Gastrocnemius medialis (tissue), 4 donors: ENCODE measurements at regions of chr3 and their contacts with region 1.

Region 1: DNA sequence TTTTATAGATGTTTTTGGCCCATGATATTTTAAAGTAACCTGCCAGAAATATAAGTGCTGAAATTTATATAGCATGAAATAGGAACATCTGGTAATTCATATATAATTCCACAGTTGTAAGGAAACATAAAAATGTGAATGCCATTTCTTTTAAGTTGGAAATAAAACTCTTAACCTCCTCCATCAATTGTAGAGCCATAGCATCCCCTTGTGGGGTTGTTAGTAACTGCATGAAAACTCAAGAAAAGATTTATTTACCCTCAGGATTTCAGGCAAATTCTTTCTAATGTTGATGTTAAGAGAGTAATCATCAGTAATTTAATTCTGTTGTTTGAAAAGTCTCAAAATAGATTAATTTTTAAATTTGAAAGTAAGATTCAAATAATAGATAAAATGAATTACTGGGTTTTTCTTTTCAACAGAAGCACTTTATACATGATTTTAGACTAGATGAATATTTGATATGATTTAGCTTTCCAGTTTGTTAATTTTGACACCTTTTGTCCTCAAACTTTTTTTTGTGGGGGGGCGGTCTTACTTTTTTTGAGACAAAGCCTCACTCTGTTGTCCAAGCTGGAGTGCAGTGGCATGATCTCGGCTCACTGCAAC is 74.7 kb downstream of the RASA2 start:
- DNase-seq: no peak
- ATAC-seq: no peak
- H3K4me3 ChIP-seq: no peak overlapping the region
- H3K27ac ChIP-seq: no peak overlapping the region
- H3K4me1 ChIP-seq: no peaks in the 10 kb centered on the region
- H3K27me3 ChIP-seq: no peaks in the 10 kb centered on the region
- CTCF ChIP-seq: peak; percentile 83 to 99 (median 86)
- POLR2A ChIP-seq: no peak

Region 2: GRCh38 chr3:141303481-141304223 is 257.9 kb before region 1 on chr3:
- in situ Hi-C with region 1: loop called in 1 of 4 experiments (anchors 25 kb)
- intact Hi-C with region 1: loop called (anchors 2 kb)
- DNase-seq: no peak
- ATAC-seq: peak; percentile 78 to 85
- H3K4me3 ChIP-seq: no peak overlapping the region
- H3K27ac ChIP-seq: no peak overlapping the region
- H3K4me1 ChIP-seq: no peaks in the 10 kb centered on the region
- H3K27me3 ChIP-seq: no peaks in the 10 kb centered on the region
- CTCF ChIP-seq: peak; percentile 61 to 87 (median 69)
- POLR2A ChIP-seq: no peak

Region 3: GRCh38 chr3:141360888-141361598 is 200.5 kb before region 1 on chr3:
- in situ Hi-C with region 1: loop called in 3 of 4 experiments (anchors 25 kb)
- intact Hi-C with region 1: loop called (anchors 2 kb)
- DNase-seq: no peak
- ATAC-seq: peak; percentile 91 to 96
- H3K4me3 ChIP-seq: peak overlapping the region in 3 of 4 donors; percentile 38 to 40 (median 40)
- H3K27ac ChIP-seq: peak overlapping the region; percentile 53 to 71 (median 63)
- H3K4me1 ChIP-seq: peaks cover 7 to 10% of the 10 kb centered on the region in 2 donors
- H3K27me3 ChIP-seq: no peaks in the 10 kb centered on the region
- CTCF ChIP-seq: peak; percentile 73 to 91 (median 77)
- POLR2A ChIP-seq: no peak

Region 4: DNA sequence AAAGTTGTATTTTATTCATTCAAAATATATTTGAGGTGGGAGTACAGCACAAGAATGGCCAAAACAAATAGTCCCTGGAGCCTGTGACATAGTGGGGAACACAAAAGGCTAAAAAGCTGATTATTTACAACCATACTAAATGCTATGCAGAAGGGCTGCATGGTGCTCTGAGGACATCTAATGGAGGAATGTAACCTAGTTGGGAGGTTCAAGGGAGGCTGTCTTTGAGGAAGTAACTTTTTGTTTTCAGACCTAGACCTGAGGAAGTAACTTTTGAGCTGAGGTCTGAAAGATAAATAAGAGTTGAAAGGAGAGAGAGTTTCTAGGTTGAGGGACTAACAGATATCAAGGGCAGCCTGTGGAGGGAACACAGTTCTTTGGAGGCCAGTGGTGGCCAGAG is 109.5 kb before region 1 on chr3:
- in situ Hi-C with region 1: loop called in 1 of 4 experiments (anchors 5 kb)
- intact Hi-C with region 1: no loop called
- DNase-seq: no peak
- ATAC-seq: peak; percentile 30 to 37
- H3K4me3 ChIP-seq: no peak overlapping the region
- H3K27ac ChIP-seq: no peak overlapping the region
- H3K4me1 ChIP-seq: peaks cover 4 to 7% of the 10 kb centered on the region in 2 donors
- H3K27me3 ChIP-seq: no peaks in the 10 kb centered on the region
- CTCF ChIP-seq: peak; percentile 39 to 74 (median 48)
- POLR2A ChIP-seq: no peak

Region 5: DNA sequence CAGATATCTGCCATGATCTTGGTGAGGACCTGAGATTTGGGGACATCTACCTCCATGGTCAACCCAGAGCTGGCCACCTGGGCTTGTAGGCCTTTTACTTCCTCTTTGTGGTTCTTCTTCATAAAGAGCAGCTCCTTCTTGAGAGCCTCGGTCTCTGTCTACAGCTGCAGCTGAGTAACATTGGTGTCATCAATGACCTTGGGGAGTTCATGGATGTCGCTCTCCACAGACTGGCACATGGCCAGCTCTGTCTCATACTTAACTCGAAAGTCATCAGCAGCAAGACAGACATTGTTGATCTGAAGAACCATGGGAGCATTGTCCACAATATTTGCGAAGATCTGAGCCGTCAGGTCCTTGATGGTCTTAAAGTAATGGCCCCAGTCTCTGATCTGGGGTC is 90.4 kb before region 1 on chr3:
- in situ Hi-C with region 1: loop called in 1 of 4 experiments (anchors 5 kb)
- intact Hi-C with region 1: no loop called
- DNase-seq: no peak
- ATAC-seq: no peak
- H3K4me3 ChIP-seq: no peak overlapping the region
- H3K27ac ChIP-seq: no peak overlapping the region
- H3K4me1 ChIP-seq: no peaks in the 10 kb centered on the region
- H3K27me3 ChIP-seq: no peaks in the 10 kb centered on the region
- CTCF ChIP-seq: no peak
- POLR2A ChIP-seq: no peak

Region 6: DNA sequence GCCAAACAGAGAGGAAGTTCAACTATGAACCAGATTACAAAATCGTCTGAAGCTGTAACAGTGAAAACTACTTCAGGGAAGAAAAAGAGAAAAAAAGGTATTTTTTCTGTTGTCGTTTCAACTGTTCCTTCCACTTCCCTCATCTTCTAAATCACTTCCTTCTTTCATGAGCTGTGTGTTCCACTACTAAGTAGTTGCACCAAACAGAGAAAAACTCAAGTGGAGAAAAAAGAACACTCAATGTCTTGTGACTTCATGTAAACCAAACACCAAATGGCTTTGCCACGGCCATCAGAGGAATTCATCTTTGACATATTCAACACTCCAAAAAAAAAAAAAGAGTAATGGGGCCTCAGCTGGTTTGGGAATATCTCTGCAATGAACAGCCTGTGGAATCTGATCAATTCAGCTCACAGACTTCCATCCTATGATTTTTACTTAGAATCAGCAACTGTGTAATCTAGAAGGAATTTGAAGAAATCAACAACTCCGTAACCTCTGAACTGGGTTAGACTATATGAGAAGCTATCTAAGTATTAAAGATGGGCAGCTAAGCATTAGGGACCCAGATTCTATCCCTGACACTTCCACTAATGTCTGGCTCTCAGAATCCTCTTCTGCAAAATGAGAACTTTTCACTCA is 129.0 kb after region 1 on chr3:
- in situ Hi-C with region 1: no loop called
- intact Hi-C with region 1: no loop called
- DNase-seq: no peak
- ATAC-seq: peak in 1 of 2 donors; percentile 28
- H3K4me3 ChIP-seq: no peak overlapping the region
- H3K27ac ChIP-seq: no peak overlapping the region
- H3K4me1 ChIP-seq: peaks cover 0 to 11% of the 10 kb centered on the region in 2 donors
- H3K27me3 ChIP-seq: no peaks in the 10 kb centered on the region
- CTCF ChIP-seq: no peak
- POLR2A ChIP-seq: no peak